Aorta (tissue), 5 donors: ENCODE measurements at regions of chr2 and their contacts with region 1.

Region 1: GRCh38 chr2:32063310-32064161 is at the start of gene SPAST:
- DNase-seq: peak; percentile 98 to 99
- ATAC-seq: peak; percentile 98
- H3K4me3 ChIP-seq: peak within 1 kb of the TSS; percentile 90 to 92
- H3K27ac ChIP-seq: peak within 1 kb of the TSS; percentile 34 to 69
- H3K4me1 ChIP-seq: peaks cover 0 to 2% of the 10 kb centered on the region in 2 donors
- H3K27me3 ChIP-seq: no peaks in the 10 kb centered on the region
- total RNA-seq, gene SPAST: 13.5 to 18.2 TPM

Region 2: GRCh38 chr2:32010670-32011484 is 52.7 kb before region 1 on chr2 and contains the start of gene MEMO1:
- intact Hi-C with region 1: loop called (anchors 2 to 5 kb)
- DNase-seq: peak; percentile 97 to 98
- ATAC-seq: peak; percentile 93
- H3K4me3 ChIP-seq: peak within 1 kb of the TSS; percentile 83 to 84
- H3K27ac ChIP-seq: peak within 1 kb of the TSS; percentile 16 to 86
- H3K4me1 ChIP-seq: peaks cover 0 to 2% of the 10 kb centered on the region in 2 donors
- H3K27me3 ChIP-seq: no peaks in the 10 kb centered on the region
- total RNA-seq, gene MEMO1: 33.6 to 36.2 TPM

Region 3: GRCh38 chr2:32039447-32040219 is 23.9 kb before region 1 on chr2 and contains the start of gene DPY30:
- intact Hi-C with region 1: loop called in 1 of 2 experiments (anchors 1 kb)
- DNase-seq: peak; percentile 96 to 97
- ATAC-seq: peak; percentile 98
- H3K4me3 ChIP-seq: peak within 1 kb of the TSS; percentile 85 to 96
- H3K27ac ChIP-seq: peak within 1 kb of the TSS in 1 of 2 donors; percentile 8
- H3K4me1 ChIP-seq: no peaks in the 10 kb centered on the region
- H3K27me3 ChIP-seq: no peaks in the 10 kb centered on the region
- total RNA-seq, gene DPY30: 38.4 to 47.5 TPM

Region 4: DNA sequence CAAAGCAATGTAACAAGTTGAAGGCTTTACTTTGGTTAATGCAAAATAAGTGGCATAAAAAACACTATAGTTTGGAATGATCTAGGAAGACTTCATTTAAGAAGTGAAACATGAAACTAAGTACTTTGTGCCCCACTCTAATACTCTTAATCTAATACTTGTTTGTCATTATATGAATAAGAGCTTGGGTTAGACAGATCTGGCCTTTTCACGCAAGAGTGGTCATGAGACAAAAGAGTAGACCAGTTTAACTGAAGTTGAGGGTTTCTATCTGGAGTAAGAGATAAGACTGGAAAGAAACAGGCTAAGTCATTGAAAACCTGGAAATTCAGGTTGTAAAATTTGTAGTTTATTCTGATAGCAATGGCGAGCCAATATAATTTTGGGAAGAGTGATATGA is 105.0 kb after region 1 on chr2:
- intact Hi-C with region 1: loop called (anchors 10 kb)
- DNase-seq: no peak
- ATAC-seq: no peak
- H3K4me3 ChIP-seq: no peak overlapping the region
- H3K27ac ChIP-seq: no peak overlapping the region
- H3K4me1 ChIP-seq: no peaks in the 10 kb centered on the region
- H3K27me3 ChIP-seq: no peaks in the 10 kb centered on the region